ENCODE measurements at regions of chr14 and their contacts with region 1.

Region 1: DNA sequence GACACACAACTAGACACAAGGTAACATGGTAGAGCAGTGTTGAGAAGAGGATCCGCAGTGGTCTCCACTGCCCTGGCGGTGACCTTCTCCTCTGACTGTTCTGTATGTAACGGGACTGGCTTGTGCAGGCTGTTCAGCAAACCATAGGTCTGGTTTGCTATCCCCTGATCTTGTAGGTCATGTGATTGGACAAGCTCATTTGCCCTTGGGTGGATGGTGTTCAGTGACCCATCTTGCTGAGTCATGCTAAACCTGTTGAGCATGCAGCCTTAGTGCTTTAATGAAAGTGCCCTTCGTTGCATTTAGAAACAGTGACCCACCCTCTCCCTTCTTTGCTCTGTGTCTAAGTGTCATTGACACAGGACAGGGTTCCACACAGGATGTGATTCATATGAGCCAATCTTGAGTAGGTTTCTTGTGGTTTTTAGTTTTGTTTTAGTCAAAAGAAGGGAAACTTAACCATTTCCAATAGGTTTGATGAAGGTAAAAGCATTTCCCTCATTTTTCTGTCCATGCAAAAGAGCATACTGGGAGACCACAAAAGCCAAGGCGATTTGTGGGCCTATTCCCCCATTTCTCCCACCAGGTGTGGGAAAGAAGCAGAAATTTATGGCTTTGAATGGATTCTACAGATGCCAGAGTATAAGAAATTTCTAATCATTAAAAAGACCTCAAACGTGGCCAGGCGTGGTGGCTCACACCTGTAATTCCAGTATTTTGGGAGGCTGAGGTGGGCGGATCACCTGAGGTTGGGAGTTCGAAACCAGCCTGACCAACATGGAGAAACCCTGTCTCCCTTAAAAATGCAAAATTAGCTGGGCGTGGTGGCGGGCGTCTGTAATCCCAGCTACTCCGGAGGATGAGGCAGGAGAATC is 32.6 kb upstream of the HIF1A start:
- DNase-seq: peak; percentile 80
- H3K4me3 Mint-ChIP-seq: peak overlapping the region; percentile 31
- H3K27ac Mint-ChIP-seq: peak overlapping the region; percentile 85
- H3K4me1 Mint-ChIP-seq: peaks cover 29% of the 10 kb centered on the region
- H3K27me3 Mint-ChIP-seq: no peaks in the 10 kb centered on the region
- CTCF ChIP-seq: no peak

Region 2: DNA sequence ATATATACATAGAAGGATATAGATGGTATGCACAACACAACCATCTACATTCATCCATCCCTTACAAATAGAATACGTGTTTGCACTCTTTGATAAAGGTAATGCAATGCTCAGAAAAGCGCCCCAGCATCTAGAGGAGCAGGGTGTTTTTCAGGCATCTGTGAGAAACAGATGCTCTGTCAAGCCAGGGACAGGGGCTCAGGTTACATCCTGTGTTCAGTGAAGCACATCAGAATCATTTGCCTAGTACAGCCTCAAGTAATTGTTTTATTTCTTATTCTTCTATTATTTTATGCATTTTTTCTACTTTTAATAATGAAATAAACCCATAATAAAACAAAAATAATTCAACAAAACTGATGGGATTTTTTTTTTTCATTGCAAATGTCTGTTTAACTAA is 17.8 kb before region 1 on chr14:
- CTCF ChIA-PET with region 1: no interaction called
- POLR2A ChIA-PET with region 1: interaction called, 17 read pairs
- intact Hi-C with region 1: no loop called
- DNase-seq: peak; percentile 30
- H3K4me3 Mint-ChIP-seq: no peak overlapping the region
- H3K27ac Mint-ChIP-seq: no peak overlapping the region
- H3K4me1 Mint-ChIP-seq: peaks cover 49% of the 10 kb centered on the region
- H3K27me3 Mint-ChIP-seq: no peaks in the 10 kb centered on the region
- CTCF ChIP-seq: no peak

Region 3: DNA sequence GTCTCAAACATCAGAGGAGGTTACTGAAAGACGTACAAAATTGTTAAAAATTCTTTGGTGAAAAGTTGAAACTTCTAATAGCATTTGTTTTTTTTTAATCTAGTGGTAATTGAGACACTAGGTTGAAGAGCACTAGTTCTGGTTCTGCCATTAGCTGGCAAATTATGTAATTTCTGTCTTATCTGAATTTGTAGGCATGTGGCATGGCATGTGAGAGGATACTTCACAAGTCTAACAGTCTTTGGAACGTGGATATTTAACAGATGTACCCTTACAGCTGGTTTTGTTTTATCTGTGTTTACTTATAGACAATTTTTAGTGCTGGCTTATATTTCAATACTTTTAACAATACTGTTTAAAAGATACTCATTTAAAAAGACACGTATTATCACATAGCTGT is 105.6 kb after region 1 on chr14:
- CTCF ChIA-PET with region 1: no interaction called
- POLR2A ChIA-PET with region 1: no interaction called
- intact Hi-C with region 1: no loop called
- DNase-seq: no peak
- H3K4me3 Mint-ChIP-seq: no peak overlapping the region
- H3K27ac Mint-ChIP-seq: no peak overlapping the region
- H3K4me1 Mint-ChIP-seq: peaks cover 15% of the 10 kb centered on the region
- H3K27me3 Mint-ChIP-seq: no peaks in the 10 kb centered on the region
- CTCF ChIP-seq: no peak